Activated CD4-positive, alpha-beta memory T cell treated with anti-CD3 and anti-CD28 coated beads, Interleukin-2, amount 10 ng/mL, durations not matched to agents 7 days and 5 days (primary cell): ENCODE measurements at regions of chr1 and their contacts with region 1.

Region 1: DNA sequence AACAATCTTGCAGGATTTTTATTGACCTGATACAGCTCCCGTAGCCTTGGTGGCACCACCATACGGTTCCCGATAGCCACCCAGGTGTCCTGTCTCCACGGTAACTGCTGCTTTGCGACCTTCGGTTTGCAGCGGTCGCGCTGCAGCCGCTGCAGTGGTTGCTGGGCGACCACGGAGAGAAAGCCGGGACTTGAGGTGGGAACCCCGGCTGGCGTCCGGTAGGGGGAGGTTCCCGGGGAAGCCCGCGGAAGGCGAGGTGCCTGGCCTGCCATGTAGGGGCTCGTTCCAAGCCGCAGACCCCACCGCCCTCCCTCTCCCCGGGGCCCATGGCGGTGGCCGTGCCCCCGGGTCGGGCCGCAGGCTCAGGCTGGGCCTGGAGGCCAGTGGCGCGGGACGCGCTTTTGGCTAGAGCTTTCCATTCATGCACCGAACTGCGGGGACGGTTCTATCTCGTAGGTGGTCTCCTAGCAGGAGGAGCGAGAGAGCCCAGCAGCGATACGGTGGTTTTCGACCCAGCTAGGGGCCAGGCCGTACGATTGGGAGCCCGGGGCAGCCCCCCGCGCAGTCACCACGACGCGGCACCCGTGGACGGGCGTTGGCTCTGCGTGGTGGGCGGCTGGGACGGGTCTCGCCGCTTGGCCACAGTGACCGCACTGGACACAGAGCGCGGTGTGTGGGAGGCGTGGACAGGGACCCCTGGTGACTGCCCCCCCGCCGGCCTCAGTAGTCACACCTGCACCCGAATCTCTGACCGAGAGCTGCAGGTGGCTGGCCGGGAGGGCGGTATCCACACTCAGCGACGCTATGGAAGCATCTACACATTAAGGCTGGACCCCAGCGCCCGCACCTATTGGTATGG is at the start of gene KLHDC9:
- DNase-seq: peak; percentile 81
- H3K4me3 Mint-ChIP-seq: peak within 1 kb of the TSS; percentile 85
- H3K27ac Mint-ChIP-seq: peak within 1 kb of the TSS; percentile 69
- H3K4me1 Mint-ChIP-seq: peaks cover 23% of the 10 kb centered on the region
- H3K27me3 Mint-ChIP-seq: peaks cover 6% of the 10 kb centered on the region
- total RNA-seq, gene KLHDC9: 1.2 TPM

Region 2: DNA sequence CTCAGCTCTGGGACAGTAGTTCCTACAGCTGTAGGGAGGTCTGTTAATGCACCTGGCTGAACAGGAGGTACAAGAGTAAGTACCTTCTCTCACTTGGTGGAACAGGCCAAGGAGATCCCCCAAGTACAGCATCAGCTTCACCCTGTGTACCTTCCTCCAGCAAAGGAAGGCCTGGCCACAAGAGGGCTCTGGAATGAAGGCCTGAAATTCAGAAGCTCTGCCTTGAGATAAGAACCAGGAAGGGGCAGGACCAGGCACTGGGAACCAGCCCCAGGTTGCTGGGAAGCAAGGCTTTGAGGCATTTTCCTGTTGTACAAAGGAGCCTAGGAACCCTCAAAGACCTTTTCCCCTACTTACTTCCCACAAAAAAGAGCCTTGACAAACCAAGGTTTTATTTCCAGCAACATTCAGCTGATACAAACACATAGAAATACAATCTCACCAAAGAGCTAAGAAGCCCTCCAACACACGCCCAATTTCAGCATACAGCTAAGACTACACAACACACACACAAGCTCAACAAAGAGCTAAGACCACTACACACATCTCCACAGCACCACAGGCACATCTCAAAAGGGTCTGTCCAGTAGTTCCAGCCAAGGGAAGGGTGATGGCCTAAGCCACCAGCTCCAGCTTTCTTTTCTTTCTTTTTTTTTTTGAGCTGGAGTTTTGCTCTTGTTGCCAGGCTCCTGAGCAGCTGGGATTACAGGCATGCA is 101.0 kb before region 1 on chr1:
- CTCF ChIA-PET with region 1: interaction called, 30 read pairs
- POLR2A ChIA-PET with region 1: interaction called, 13 read pairs
- DNase-seq: peak; percentile 59
- H3K4me3 Mint-ChIP-seq: no peak overlapping the region
- H3K27ac Mint-ChIP-seq: no peak overlapping the region
- H3K4me1 Mint-ChIP-seq: peaks cover 9% of the 10 kb centered on the region
- H3K27me3 Mint-ChIP-seq: no peaks in the 10 kb centered on the region

Region 3: GRCh38 chr1:161038523-161039153 is 59.8 kb before region 1 on chr1 and contains the start of gene TSTD1:
- CTCF ChIA-PET with region 1: interaction called, 46 read pairs
- POLR2A ChIA-PET with region 1: interaction called, 78 read pairs
- DNase-seq: peak; percentile 89
- H3K4me3 Mint-ChIP-seq: peak within 1 kb of the TSS; percentile 88
- H3K27ac Mint-ChIP-seq: peak within 1 kb of the TSS; percentile 88
- H3K4me1 Mint-ChIP-seq: peaks cover 50% of the 10 kb centered on the region
- H3K27me3 Mint-ChIP-seq: no peaks in the 10 kb centered on the region
- total RNA-seq, gene TSTD1: 56.1 to 63.8 TPM

Region 4: GRCh38 chr1:161082991-161083742 is 15.3 kb before region 1 on chr1:
- CTCF ChIA-PET with region 1: interaction called, 21 read pairs
- POLR2A ChIA-PET with region 1: interaction called, 4 read pairs
- DNase-seq: no peak
- H3K4me3 Mint-ChIP-seq: no peak overlapping the region
- H3K27ac Mint-ChIP-seq: no peak overlapping the region
- H3K4me1 Mint-ChIP-seq: peaks cover 11% of the 10 kb centered on the region
- H3K27me3 Mint-ChIP-seq: peaks cover 2% of the 10 kb centered on the region

Region 5: DNA sequence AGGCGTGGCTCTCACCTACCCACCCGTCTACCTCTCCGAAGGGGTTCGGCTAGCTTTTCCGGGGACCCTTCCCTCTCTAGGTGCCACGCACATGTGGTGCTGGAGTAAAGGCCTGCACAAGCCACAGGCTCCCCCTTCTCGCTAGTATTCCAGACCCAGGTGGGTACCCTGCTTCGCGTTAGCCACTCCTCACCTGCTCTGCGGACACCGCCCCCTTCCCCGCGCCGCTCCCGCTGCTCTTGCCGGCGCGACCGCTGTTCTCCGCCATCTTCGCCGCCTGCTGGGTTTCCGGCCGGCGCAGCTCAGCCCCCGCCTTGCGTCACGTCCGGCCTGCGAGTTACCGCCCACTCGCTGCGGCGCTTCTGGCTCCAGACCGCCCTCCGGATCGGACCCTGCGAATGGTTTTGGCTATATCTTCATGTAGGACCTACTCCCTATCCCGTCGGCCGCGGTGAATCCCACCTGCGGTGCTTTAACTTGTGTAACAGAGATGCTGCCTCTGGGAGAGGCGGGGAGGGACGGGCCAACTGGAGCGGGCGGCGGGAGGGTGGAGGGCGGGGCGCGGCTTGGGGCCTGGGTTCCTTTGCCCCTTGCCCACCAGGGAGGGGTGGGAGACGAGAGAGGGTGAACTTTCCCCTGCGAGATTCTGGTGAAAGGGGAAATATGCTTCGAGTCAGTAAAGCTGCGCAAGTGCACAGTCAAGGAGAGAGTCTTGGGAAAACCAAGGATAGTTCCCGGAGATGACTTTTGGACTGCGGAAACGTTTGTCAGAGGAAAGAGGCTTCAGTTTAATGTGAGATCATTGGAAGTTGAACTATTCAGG is 19.5 kb after region 1 on chr1 and contains the starts of genes NIT1 and PFDN2:
- CTCF ChIA-PET with region 1: interaction called, 14 read pairs
- POLR2A ChIA-PET with region 1: interaction called, 27 read pairs
- DNase-seq: peak; percentile 89
- H3K4me3 Mint-ChIP-seq: peak within 1 kb of the TSS; percentile 93
- H3K27ac Mint-ChIP-seq: peak within 1 kb of the TSS; percentile 95
- H3K4me1 Mint-ChIP-seq: peaks cover 66% of the 10 kb centered on the region
- H3K27me3 Mint-ChIP-seq: no peaks in the 10 kb centered on the region
- total RNA-seq, gene NIT1: 50.8 to 51.5 TPM
- total RNA-seq, gene PFDN2: 76.6 to 78.8 TPM

Region 6: GRCh38 chr1:161132410-161133219 is 34.2 kb after region 1 on chr1 and contains the start of gene DEDD:
- CTCF ChIA-PET with region 1: interaction called, 11 read pairs
- POLR2A ChIA-PET with region 1: interaction called, 4 read pairs
- DNase-seq: peak; percentile 94
- H3K4me3 Mint-ChIP-seq: no peak within 1 kb of the TSS
- H3K27ac Mint-ChIP-seq: no peak within 1 kb of the TSS
- H3K4me1 Mint-ChIP-seq: peaks cover 43% of the 10 kb centered on the region
- H3K27me3 Mint-ChIP-seq: no peaks in the 10 kb centered on the region
- total RNA-seq, gene DEDD: 38.2 to 40.0 TPM